Endothelial cell of umbilical vein (primary cell): ENCODE measurements at regions of chr18 and their contacts with region 1.

Region 1: GRCh38 chr18:55589625-55590291 is 1.8 kb upstream of the TCF4 start:
- DNase-seq: peak; percentile 97
- H3K4me3 ChIP-seq: peak overlapping the region; percentile 87 to 100 (median 98)
- H3K27ac ChIP-seq: peak overlapping the region; percentile 96
- H3K4me1 ChIP-seq: peaks cover 23% of the 10 kb centered on the region
- H3K27me3 ChIP-seq: no peaks in the 10 kb centered on the region
- CTCF ChIP-seq: no peak
- POLR2A ChIP-seq: peak; percentile 81

Region 2: GRCh38 chr18:55234366-55235093 is 355.2 kb before region 1 on chr18:
- CTCF ChIA-PET with region 1: interaction called, 5 read pairs
- POLR2A ChIA-PET with region 1: no interaction called
- dilution Hi-C with region 1: no loop called
- intact Hi-C with region 1: loop called (anchors 2 kb)
- DNase-seq: peak; percentile 82
- H3K4me3 ChIP-seq: no peak overlapping the region
- H3K27ac ChIP-seq: peak overlapping the region; percentile 61
- H3K4me1 ChIP-seq: peaks cover 22% of the 10 kb centered on the region
- H3K27me3 ChIP-seq: no peaks in the 10 kb centered on the region
- CTCF ChIP-seq: peak; percentile 63 to 69
- POLR2A ChIP-seq: no peak

Region 3: GRCh38 chr18:55337908-55338521 is 251.7 kb before region 1 on chr18:
- CTCF ChIA-PET with region 1: no interaction called
- POLR2A ChIA-PET with region 1: no interaction called
- dilution Hi-C with region 1: no loop called
- intact Hi-C with region 1: loop called (anchors 5 kb)
- DNase-seq: peak; percentile 92
- H3K4me3 ChIP-seq: no peak overlapping the region
- H3K27ac ChIP-seq: peak overlapping the region; percentile 83
- H3K4me1 ChIP-seq: peaks cover 45% of the 10 kb centered on the region
- H3K27me3 ChIP-seq: no peaks in the 10 kb centered on the region
- CTCF ChIP-seq: no peak
- POLR2A ChIP-seq: no peak

Region 4: GRCh38 chr18:55415258-55415871 is 174.4 kb before region 1 on chr18:
- CTCF ChIA-PET with region 1: interaction called, 12 read pairs
- POLR2A ChIA-PET with region 1: no interaction called
- dilution Hi-C with region 1: no loop called
- intact Hi-C with region 1: loop called (anchors 1 kb)
- DNase-seq: peak; percentile 90
- H3K4me3 ChIP-seq: no peak overlapping the region
- H3K27ac ChIP-seq: peak overlapping the region; percentile 13
- H3K4me1 ChIP-seq: peaks cover 45% of the 10 kb centered on the region
- H3K27me3 ChIP-seq: no peaks in the 10 kb centered on the region
- CTCF ChIP-seq: peak; percentile 79 to 91
- POLR2A ChIP-seq: no peak

Region 5: GRCh38 chr18:55694291-55694690 is 104.5 kb after region 1 on chr18:
- CTCF ChIA-PET with region 1: no interaction called
- POLR2A ChIA-PET with region 1: no interaction called
- dilution Hi-C with region 1: no loop called
- intact Hi-C with region 1: no loop called
- DNase-seq: no peak
- H3K4me3 ChIP-seq: no peak overlapping the region
- H3K27ac ChIP-seq: no peak overlapping the region
- H3K4me1 ChIP-seq: no peaks in the 10 kb centered on the region
- H3K27me3 ChIP-seq: peaks cover 0 to 2% of the 10 kb centered on the region in 2 experiments
- CTCF ChIP-seq: no peak
- POLR2A ChIP-seq: no peak

Region 6: GRCh38 chr18:55768255-55768654 is 178.5 kb after region 1 on chr18:
- CTCF ChIA-PET with region 1: no interaction called
- POLR2A ChIA-PET with region 1: no interaction called
- dilution Hi-C with region 1: no loop called
- intact Hi-C with region 1: no loop called
- DNase-seq: peak; percentile 51
- H3K4me3 ChIP-seq: no peak overlapping the region
- H3K27ac ChIP-seq: no peak overlapping the region
- H3K4me1 ChIP-seq: peaks cover 19% of the 10 kb centered on the region
- H3K27me3 ChIP-seq: no peaks in the 10 kb centered on the region
- CTCF ChIP-seq: no peak
- POLR2A ChIP-seq: no peak

Region 7: DNA sequence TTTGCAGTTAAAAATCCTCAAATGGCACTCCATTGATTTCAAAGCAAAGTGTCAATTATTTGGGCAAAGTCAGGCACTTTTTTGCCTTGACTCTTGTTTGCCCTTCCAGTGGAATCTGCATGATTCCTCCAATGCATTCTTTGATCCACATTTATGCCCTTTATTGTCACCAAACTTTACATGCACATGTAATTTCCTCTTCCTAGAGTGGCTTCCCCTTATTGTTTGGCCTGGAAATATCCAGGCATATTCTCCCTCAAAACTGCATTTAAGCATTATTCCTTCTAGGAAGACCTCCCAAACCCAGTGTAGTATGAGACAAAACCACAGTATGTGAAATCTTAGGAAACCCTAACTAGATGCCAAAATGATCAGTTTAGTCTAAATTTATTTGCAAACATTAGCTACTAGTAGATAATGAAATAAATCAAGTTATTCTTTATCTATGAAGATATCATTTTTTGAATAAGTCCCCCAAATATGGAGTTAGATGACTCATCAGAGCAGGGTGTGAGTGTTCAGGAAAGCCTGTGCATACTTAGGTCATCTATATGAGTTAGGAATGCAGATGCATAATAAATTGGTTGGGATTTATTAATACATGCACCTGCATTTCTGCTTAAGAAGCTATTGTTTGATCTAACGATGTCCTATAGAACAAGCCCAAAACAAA is 431.5 kb after region 1 on chr18:
- CTCF ChIA-PET with region 1: no interaction called
- POLR2A ChIA-PET with region 1: no interaction called
- dilution Hi-C with region 1: no loop called
- intact Hi-C with region 1: loop called (anchors 1 kb)
- DNase-seq: peak; percentile 86
- H3K4me3 ChIP-seq: peak overlapping the region in 1 of 3 experiments; percentile 3
- H3K27ac ChIP-seq: peak overlapping the region; percentile 93
- H3K4me1 ChIP-seq: peaks cover 35% of the 10 kb centered on the region
- H3K27me3 ChIP-seq: no peaks in the 10 kb centered on the region
- CTCF ChIP-seq: no peak
- POLR2A ChIP-seq: no peak

Region 8: GRCh38 chr18:56458770-56459712 is 869.3 kb after region 1 on chr18:
- CTCF ChIA-PET with region 1: no interaction called
- POLR2A ChIA-PET with region 1: interaction called, 4 read pairs
- dilution Hi-C with region 1: no loop called
- intact Hi-C with region 1: loop called (anchors 5 kb)
- DNase-seq: peak; percentile 95
- H3K4me3 ChIP-seq: no peak overlapping the region
- H3K27ac ChIP-seq: peak overlapping the region; percentile 65
- H3K4me1 ChIP-seq: peaks cover 28% of the 10 kb centered on the region
- H3K27me3 ChIP-seq: no peaks in the 10 kb centered on the region
- CTCF ChIP-seq: no peak
- POLR2A ChIP-seq: no peak